ENCODE measurements at regions of chr4 and their contacts with region 1.

Region 1: DNA sequence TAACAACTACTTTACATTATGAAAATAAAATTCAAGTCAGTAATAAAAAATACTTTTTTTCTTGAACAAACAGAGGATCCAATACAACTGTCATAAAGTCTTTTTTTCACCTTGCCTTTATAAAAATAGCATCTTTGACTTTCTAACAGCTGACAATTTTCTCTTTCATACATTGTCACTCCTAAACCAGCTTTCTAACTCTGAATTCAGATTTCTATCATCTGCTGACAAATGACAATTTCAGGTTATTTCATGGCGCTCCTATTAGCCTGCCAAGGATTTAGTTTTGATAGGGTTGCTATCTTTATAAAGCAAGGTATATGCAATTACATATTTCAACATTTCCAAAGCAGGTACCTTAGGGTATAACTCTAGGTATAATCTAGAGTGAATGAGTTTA is 14.6 kb downstream of the NAA11 start:
- DNase-seq: no peak

Region 2: DNA sequence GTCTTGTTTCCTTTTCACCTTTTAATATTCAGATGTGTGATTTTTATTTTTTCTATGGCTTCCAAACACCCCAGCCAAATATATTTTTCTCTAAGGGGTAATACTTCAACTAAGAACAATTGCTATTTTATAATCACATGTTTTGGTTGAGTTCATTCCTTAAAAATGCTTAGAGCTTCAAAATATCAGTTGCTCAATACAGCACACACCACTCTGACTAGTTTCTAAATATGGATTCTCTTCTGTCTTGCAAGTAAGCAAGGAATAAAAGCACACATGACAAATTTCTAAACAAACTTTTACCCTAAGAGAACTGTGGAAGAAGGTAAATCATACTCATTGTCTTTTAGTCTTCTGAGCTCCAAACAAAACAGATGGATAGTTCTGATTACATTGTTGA is 734.5 kb after region 1 on chr4:
- intact Hi-C with region 1: loop called in 1 of 2 experiments (anchors 5 kb)
- DNase-seq: no peak

Measured in posterior vena cava (tissue), 2 donors.